ENCODE measurements at regions of chr10 and their contacts with region 1.

Region 1: DNA sequence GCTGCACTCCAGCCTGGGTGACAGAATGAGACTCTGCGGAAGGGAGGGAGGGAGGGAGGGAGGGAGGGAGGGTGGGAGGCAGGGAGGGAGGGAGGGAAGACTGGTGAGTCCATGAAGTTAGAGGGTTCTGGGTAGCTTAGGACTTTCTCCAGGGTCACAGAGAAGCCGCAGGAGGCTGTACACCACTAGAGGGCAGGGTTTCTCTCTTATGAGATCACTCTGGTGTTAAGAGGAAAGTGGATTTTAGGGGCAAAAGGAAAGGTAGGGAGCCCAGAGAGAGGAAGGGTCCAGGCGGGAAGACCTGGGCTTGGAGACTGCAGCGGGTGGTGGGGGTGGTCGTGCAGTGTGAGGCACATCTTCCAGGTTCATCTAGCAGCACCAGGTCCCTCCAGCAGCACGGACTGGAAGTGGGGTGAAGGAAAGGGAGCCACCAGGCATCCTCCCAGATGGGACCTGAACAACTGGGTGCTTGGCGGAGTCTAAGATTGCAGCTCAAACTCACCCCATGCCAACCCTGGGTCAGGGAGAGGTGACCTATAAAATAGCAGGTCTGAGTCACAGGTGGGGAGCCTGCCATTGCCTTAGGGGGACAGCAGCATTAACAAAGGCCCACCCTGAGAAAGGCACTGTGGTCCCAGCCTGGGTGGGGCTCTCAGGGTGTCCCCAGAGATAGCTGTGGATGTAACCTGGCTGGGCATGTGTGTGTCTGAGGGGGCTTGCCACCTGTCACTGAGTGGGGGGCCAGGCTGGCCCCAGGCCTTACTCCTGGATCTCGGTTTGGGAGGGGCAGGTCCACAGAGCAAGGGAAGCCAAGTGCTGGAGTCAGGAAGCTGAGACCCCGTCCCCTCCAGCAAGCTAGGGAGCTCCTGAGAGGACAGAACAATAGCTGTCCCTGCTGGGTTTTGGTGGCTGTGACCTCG is 48.5 kb upstream of the SLC29A3 start:
- DNase-seq: peak; percentile 54
- H3K4me3 ChIP-seq: no peak overlapping the region
- H3K27ac ChIP-seq: peak overlapping the region; percentile 82
- H3K4me1 ChIP-seq: peaks cover 19% of the 10 kb centered on the region
- H3K27me3 ChIP-seq: no peaks in the 10 kb centered on the region
- CTCF ChIP-seq: peak; percentile 66 to 80
- POLR2A ChIP-seq: no peak

Region 2: DNA sequence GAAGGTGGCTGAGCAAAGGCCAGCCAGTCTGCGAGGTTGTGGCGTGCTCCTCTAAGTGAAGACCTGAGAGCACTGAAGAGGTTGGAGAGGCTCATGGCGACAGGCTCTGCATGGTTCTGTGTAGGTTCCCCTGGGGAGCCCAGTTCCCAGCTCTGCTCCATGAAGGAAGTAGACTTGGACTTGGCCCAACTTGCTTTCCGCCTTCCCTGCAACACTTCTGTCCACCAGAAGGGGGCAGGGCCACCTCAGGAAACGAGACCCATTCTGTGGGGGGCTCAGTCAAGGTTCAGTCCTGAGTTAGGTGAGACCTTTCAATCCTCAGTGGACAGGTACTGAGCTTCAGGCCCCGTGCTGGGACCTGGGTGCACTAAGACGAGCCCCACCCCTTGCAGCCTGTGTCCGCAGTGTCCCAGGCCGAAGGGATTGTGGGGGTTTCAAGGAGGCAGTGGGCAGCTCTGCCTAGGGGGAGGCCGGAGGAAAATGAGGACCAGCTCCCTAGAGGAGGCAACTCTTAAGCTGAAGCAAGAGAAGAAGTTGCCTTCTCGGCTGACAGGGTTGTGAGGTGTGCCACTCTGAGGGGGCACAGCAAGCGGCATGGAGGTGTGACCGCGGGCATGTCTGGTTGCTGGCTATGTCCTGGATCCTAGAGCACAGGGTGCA is 367.2 kb before region 1 on chr10:
- CTCF ChIA-PET with region 1: interaction called, 13 read pairs
- POLR2A ChIA-PET with region 1: no interaction called
- dilution Hi-C with region 1: no loop called
- intact Hi-C with region 1: loop called (anchors 1 kb)
- DNase-seq: peak; percentile 56
- H3K4me3 ChIP-seq: no peak overlapping the region
- H3K27ac ChIP-seq: no peak overlapping the region
- H3K4me1 ChIP-seq: no peaks in the 10 kb centered on the region
- H3K27me3 ChIP-seq: peaks cover 4 to 10% of the 10 kb centered on the region in 2 experiments
- CTCF ChIP-seq: peak; percentile 89 to 91
- POLR2A ChIP-seq: no peak

Region 3: GRCh38 chr10:71205468-71205867 is 65.1 kb before region 1 on chr10:
- CTCF ChIA-PET with region 1: interaction called, 18 read pairs
- POLR2A ChIA-PET with region 1: no interaction called
- dilution Hi-C with region 1: no loop called
- intact Hi-C with region 1: no loop called
- DNase-seq: peak; percentile 73
- H3K4me3 ChIP-seq: no peak overlapping the region
- H3K27ac ChIP-seq: no peak overlapping the region
- H3K4me1 ChIP-seq: peaks cover 17% of the 10 kb centered on the region
- H3K27me3 ChIP-seq: peaks cover 13 to 18% of the 10 kb centered on the region in 2 experiments
- CTCF ChIP-seq: no peak
- POLR2A ChIP-seq: no peak

Region 4: DNA sequence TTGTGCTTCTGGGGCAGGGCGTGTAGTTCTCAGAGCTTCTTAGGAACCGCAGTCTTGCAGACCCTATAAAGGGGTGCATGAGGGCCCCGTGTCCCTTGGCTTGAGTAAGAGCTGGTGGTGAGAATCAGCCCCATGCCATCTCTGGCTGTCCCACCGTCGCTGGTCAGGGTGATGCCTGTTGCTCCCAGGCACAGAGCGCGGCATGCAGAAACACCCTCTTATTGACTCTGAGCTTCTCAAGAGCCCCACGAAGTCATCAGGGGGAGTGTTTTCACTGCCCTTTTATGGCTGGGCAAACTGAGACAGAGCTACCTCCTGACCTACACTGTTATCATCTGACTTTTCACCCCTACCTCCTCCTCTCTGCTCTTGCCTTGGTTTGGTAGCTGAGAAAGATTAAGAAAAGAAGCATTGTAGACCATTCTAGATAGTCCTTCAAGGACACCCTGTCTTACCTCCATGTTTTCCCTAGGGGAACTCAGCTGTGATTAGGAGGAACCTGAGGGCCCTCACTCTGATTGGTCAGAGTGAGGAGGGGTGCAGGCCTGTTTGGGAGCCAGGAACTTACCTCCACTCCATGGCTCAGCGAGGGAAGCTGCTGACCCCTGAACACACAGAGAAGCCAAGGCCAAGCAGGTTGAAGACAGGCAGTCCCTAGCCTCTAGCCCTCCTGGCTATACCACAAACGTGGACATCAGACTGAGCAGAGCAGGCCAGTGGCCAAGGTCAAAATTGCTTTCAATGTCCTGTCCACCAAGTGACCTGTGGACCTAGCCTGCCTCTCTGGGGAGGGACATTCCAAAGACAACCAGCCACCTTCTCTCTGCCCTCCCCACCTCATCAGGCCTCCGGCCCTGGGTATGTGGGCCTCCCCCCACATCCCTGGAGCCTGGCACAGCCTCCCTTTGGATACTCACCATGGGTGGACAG is 40.6 kb before region 1 on chr10:
- CTCF ChIA-PET with region 1: interaction called, 13 read pairs
- POLR2A ChIA-PET with region 1: no interaction called
- dilution Hi-C with region 1: no loop called
- intact Hi-C with region 1: no loop called
- DNase-seq: no peak
- H3K4me3 ChIP-seq: no peak overlapping the region
- H3K27ac ChIP-seq: no peak overlapping the region
- H3K4me1 ChIP-seq: no peaks in the 10 kb centered on the region
- H3K27me3 ChIP-seq: peaks cover 3 to 15% of the 10 kb centered on the region in 2 experiments
- CTCF ChIP-seq: no peak
- POLR2A ChIP-seq: no peak

Region 5: DNA sequence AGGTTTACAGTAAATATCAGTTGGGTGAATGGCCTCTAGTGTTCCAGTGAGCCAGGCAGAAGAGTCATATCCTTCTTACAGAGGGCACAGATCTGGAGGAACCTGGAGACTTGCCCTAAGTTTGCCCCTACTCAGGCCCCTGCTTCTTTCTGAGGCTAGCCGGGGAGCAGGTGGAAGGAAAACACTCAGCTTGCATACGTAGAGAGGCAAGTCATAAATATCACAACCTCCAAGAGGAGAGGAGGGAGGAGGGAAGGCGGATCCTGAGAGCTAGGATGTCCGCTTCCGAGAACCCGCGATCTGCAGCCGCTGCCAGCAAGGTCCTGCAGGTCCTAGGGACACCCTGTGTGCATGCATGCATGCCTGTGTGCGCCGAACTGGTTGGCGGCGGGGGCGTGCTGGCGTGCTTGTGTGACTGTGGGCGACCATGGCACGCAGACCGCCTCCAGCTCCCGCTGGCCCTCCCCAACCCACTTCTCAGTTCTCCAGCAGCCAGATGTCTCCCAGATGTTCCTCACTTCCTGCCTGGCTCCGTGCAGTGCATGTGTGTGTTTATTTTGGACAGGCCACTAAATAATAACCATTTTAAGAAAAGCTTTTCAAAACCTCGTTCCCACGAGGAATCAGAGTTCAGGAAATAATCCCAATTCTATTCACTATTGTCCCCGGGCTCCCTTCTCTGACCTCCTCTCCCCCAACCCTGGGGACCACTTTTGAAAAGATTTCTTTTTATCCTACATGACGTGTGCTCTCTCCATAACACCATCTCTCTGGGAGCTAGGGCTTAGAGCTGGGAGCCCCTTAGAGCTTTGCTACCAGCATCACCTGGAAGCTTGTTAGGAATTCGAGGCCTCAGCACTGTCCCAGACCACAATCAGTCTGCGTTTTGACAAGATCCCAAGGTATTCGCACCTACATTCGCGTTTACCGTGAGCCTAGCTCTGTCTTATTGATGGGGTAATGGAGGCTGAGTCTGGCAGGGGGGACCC is 25.8 kb before region 1 on chr10:
- CTCF ChIA-PET with region 1: interaction called, 21 read pairs
- POLR2A ChIA-PET with region 1: interaction called, 3 read pairs
- dilution Hi-C with region 1: no loop called
- intact Hi-C with region 1: loop called (anchors 2 kb)
- DNase-seq: peak; percentile 59
- H3K4me3 ChIP-seq: no peak overlapping the region
- H3K27ac ChIP-seq: no peak overlapping the region
- H3K4me1 ChIP-seq: peaks cover 27% of the 10 kb centered on the region
- H3K27me3 ChIP-seq: peaks cover 0 to 10% of the 10 kb centered on the region in 2 experiments
- CTCF ChIP-seq: no peak
- POLR2A ChIP-seq: no peak

Region 6: GRCh38 chr10:71285180-71285545 is 14.6 kb after region 1 on chr10:
- CTCF ChIA-PET with region 1: interaction called, 97 read pairs
- POLR2A ChIA-PET with region 1: no interaction called
- dilution Hi-C with region 1: no loop called
- intact Hi-C with region 1: loop called (anchors 1 kb)
- DNase-seq: peak; percentile 36
- H3K4me3 ChIP-seq: no peak overlapping the region
- H3K27ac ChIP-seq: no peak overlapping the region
- H3K4me1 ChIP-seq: no peaks in the 10 kb centered on the region
- H3K27me3 ChIP-seq: no peaks in the 10 kb centered on the region
- CTCF ChIP-seq: peak; percentile 64 to 82
- POLR2A ChIP-seq: no peak

Measured in endothelial cell of umbilical vein (primary cell).